Activated CD8-positive, alpha-beta T cell treated with anti-CD3 and anti-CD28 coated beads, Interleukin-2, amount 10 ng/mL, durations not matched to agents 7 days and 5 days (primary cell): ENCODE measurements at regions of chr6 and their contacts with region 1.

Region 1: GRCh38 chr6:136289579-136290409 is at the start of gene BCLAF1:
- DNase-seq: peak; percentile 100
- ATAC-seq: peak; percentile 81
- H3K4me3 Mint-ChIP-seq: peak within 1 kb of the TSS; percentile 98
- H3K27ac Mint-ChIP-seq: peak within 1 kb of the TSS; percentile 100
- H3K4me1 Mint-ChIP-seq: peaks cover 50% of the 10 kb centered on the region
- H3K27me3 Mint-ChIP-seq: no peaks in the 10 kb centered on the region
- total RNA-seq, gene BCLAF1: 126 to 133 TPM

Region 2: GRCh38 chr6:136236466-136237293 is 53.1 kb before region 1 on chr6:
- CTCF ChIA-PET with region 1: no interaction called
- POLR2A ChIA-PET with region 1: interaction called, 10 read pairs
- DNase-seq: no peak
- ATAC-seq: no peak
- H3K4me3 Mint-ChIP-seq: no peak overlapping the region
- H3K27ac Mint-ChIP-seq: no peak overlapping the region
- H3K4me1 Mint-ChIP-seq: peaks cover 19% of the 10 kb centered on the region
- H3K27me3 Mint-ChIP-seq: no peaks in the 10 kb centered on the region

Region 3: DNA sequence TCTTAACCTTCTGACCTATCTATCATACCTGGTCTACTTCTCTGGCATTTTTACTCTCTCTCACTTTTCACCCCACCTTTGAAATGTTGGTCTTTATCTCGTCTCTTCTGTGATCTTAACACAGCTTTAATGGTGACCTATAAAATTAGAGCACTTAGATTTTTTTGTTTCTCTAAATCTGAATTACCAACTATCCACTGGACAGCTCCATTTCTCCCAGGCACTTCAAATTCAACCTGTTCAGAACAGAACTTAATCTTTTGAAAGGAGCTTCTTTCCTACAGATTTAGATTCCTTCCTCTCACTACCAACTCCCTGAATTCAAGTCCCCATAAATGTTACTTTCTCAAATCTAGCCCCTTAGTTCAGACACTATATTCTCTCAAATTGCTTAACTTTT is 24.7 kb before region 1 on chr6:
- CTCF ChIA-PET with region 1: interaction called, 10 read pairs
- POLR2A ChIA-PET with region 1: interaction called, 8 read pairs
- DNase-seq: no peak
- ATAC-seq: no peak
- H3K4me3 Mint-ChIP-seq: no peak overlapping the region
- H3K27ac Mint-ChIP-seq: peak overlapping the region; percentile 37
- H3K4me1 Mint-ChIP-seq: no peaks in the 10 kb centered on the region
- H3K27me3 Mint-ChIP-seq: no peaks in the 10 kb centered on the region

Region 4: DNA sequence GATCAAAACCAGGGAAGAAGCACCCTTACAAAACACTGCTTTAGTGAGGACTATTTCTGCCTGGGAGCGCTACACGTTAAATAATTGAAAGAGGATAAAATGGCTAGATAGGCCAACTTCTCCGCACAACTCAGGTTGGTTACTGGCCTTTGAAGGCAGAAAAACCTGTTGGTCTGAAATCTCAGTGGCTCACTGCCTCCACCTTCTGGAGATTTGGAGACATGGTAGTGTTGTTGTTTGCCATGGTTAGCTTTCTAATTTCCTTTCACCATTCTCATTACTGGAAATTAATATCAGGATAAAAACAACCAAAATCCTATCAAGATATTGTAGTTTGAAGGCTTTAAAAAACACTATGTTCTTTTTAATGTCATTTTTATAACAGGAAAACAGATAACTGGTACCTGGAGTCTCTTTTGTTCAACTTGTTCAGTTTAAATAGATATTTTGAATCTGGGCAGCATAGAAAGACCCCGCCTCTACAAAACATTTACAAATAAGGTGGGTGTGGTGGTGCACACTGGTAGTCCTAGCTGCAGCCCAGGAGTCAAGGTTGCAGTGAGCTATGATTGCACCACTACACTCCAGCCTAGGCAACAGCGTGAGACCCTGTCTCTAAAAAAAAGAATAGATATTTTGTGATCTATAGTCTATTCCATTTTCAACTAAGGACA is 27.4 kb after region 1 on chr6:
- CTCF ChIA-PET with region 1: interaction called, 28 read pairs
- POLR2A ChIA-PET with region 1: interaction called, 38 read pairs
- DNase-seq: peak; percentile 77
- ATAC-seq: peak; percentile 90
- H3K4me3 Mint-ChIP-seq: no peak overlapping the region
- H3K27ac Mint-ChIP-seq: no peak overlapping the region
- H3K4me1 Mint-ChIP-seq: peaks cover 4% of the 10 kb centered on the region
- H3K27me3 Mint-ChIP-seq: peaks cover 8% of the 10 kb centered on the region

Region 5: GRCh38 chr6:136365776-136366354 is 76.1 kb after region 1 on chr6:
- CTCF ChIA-PET with region 1: no interaction called
- POLR2A ChIA-PET with region 1: no interaction called
- DNase-seq: peak; percentile 54
- ATAC-seq: peak; percentile 60
- H3K4me3 Mint-ChIP-seq: peak overlapping the region; percentile 1
- H3K27ac Mint-ChIP-seq: peak overlapping the region; percentile 0
- H3K4me1 Mint-ChIP-seq: peaks cover 9% of the 10 kb centered on the region
- H3K27me3 Mint-ChIP-seq: peaks cover 13% of the 10 kb centered on the region